Panc1 (cell line): ENCODE measurements at regions of chr2 and their contacts with region 1.

Region 1: DNA sequence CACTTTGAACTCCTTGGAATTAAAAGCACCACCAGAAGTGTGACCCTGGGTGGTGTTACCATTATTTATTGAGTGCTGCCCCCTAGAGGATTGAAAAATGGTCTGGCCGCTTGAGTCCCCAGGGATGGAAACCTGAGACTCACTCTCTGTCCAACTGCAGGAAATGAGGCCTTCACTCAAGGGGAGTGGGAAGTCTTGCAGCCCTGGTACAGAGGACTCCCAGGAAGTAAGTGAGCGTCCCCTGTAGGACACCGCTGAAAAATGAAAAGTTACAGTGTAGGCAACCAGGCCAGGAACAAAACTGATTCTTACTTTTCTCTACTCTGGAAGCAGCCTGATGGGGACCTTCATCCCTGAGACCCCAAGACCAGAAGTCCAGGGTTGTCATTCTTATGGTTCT is 2.2 kb upstream of the NRP2 start:
- DNase-seq: peak; percentile 41
- ATAC-seq: peak; percentile 82
- H3K4me3 ChIP-seq: no peak overlapping the region
- H3K27ac ChIP-seq: no peak overlapping the region
- H3K4me1 ChIP-seq: peaks cover 2% of the 10 kb centered on the region; the same call in 1 of the 2 replicates
- H3K27me3 ChIP-seq: peaks cover 16% of the 10 kb centered on the region
- CTCF ChIP-seq: peak; percentile 86

Region 2: DNA sequence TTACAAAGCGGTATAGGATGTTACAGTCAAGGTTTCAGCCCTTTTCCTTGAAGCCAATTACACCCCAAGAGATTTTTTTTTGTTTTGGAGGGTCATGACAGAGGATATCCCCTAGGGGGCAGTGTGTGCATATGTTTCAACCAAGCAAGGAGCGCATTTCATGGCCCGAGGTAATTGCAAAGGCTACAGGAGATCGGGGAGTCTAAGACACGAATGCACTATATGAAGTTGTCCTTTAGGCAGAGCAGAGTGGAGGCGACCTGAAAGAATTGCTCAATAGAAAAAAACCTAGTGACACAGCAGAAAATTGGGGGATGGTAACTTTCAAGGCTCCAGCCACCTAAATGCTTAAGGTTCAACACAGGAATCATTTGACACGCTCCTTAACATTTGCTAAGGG is 1354.6 kb before region 1 on chr2:
- CTCF ChIA-PET with region 1: no interaction called
- POLR2A ChIA-PET with region 1: no interaction called
- in situ Hi-C with region 1: no loop called
- intact Hi-C with region 1: loop called (anchors 5 kb)
- DNase-seq: peak; percentile 47
- ATAC-seq: peak; percentile 90
- H3K4me3 ChIP-seq: no peak overlapping the region
- H3K27ac ChIP-seq: no peak overlapping the region
- H3K4me1 ChIP-seq: no peaks in the 10 kb centered on the region
- H3K27me3 ChIP-seq: no peaks in the 10 kb centered on the region
- CTCF ChIP-seq: peak; percentile 85

Region 3: DNA sequence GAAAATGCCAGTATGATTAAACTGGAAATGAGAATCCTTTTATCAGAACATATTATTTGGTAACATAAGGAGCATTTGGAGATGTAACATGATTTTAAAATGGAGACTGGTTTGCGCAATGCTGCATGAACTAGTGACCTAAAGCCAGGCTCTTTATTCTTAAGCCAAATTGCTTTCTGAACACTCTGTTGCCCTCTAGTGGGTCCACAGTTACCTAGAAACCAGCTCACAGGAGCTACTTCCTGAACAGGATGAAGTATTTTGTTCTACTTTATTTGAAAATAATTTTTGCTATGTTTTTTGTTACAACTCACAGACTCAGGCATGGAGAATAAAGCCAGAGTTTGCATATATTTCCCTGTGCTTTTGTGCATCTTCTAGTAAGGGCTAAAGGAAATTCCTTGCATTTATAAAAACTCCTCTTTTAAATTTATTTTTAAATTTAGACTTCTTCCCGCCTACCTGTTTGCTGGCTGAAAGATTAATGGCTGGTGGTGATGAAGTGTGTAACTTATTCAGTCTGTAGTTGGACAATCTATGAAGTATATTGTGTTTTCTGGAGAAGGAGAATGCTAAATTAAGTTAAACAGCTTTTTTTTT is 988.1 kb before region 1 on chr2:
- CTCF ChIA-PET with region 1: interaction called, 5 read pairs
- POLR2A ChIA-PET with region 1: no interaction called
- in situ Hi-C with region 1: no loop called
- intact Hi-C with region 1: loop called (anchors 10 kb)
- DNase-seq: peak; percentile 32
- ATAC-seq: peak; percentile 72; the same call in 1 of the 2 replicates
- H3K4me3 ChIP-seq: no peak overlapping the region
- H3K27ac ChIP-seq: no peak overlapping the region
- H3K4me1 ChIP-seq: no peaks in the 10 kb centered on the region
- H3K27me3 ChIP-seq: no peaks in the 10 kb centered on the region
- CTCF ChIP-seq: peak; percentile 73; the same call in 1 of the 2 replicates

Region 4: GRCh38 chr2:204871231-204871953 is 808.7 kb before region 1 on chr2:
- CTCF ChIA-PET with region 1: interaction called, 4 read pairs
- POLR2A ChIA-PET with region 1: no interaction called
- in situ Hi-C with region 1: no loop called
- intact Hi-C with region 1: loop called (anchors 5 kb)
- DNase-seq: peak; percentile 15
- ATAC-seq: 0 out of 2 replicates have a peak, but pooled peaks have one; percentile 70
- H3K4me3 ChIP-seq: no peak overlapping the region
- H3K27ac ChIP-seq: no peak overlapping the region; the same call in 1 of the 2 replicates
- H3K4me1 ChIP-seq: no peaks in the 10 kb centered on the region; the same call in 1 of the 2 replicates
- H3K27me3 ChIP-seq: no peaks in the 10 kb centered on the region
- CTCF ChIP-seq: peak; percentile 64; the same call in 1 of the 2 replicates

Region 5: GRCh38 chr2:205024822-205025518 is 655.1 kb before region 1 on chr2:
- CTCF ChIA-PET with region 1: no interaction called
- POLR2A ChIA-PET with region 1: no interaction called
- in situ Hi-C with region 1: no loop called
- intact Hi-C with region 1: loop called (anchors 10 kb)
- DNase-seq: peak; percentile 85
- ATAC-seq: peak; percentile 96
- H3K4me3 ChIP-seq: peak overlapping the region; percentile 37 to 65
- H3K27ac ChIP-seq: peak overlapping the region; percentile 98
- H3K4me1 ChIP-seq: peaks cover 36% of the 10 kb centered on the region
- H3K27me3 ChIP-seq: no peaks in the 10 kb centered on the region
- CTCF ChIP-seq: no peak

Region 6: DNA sequence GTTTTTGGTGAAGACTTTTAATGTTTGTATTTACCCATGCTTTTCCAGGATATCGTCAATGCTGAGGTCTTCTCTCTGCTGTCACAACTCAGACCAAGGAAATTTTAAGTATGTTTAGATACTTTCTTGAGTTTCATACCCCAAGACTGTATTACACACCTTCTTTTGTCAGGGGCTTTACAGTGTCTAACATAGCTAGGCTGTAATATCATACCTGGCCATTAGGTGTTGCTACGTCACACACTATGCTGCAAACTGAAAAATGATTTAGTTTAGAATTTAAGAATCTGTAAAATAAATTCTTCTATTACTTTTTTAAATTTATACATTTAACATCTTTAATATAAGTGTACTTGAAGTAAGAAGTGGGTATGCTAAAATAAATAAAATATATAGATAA is 356.1 kb before region 1 on chr2:
- CTCF ChIA-PET with region 1: interaction called, 5 read pairs
- POLR2A ChIA-PET with region 1: no interaction called
- in situ Hi-C with region 1: no loop called
- intact Hi-C with region 1: loop called (anchors 10 kb)
- DNase-seq: no peak
- ATAC-seq: no peak
- H3K4me3 ChIP-seq: no peak overlapping the region
- H3K27ac ChIP-seq: no peak overlapping the region
- H3K4me1 ChIP-seq: no peaks in the 10 kb centered on the region
- H3K27me3 ChIP-seq: no peaks in the 10 kb centered on the region
- CTCF ChIP-seq: peak; percentile 65; the same call in 1 of the 2 replicates

Region 7: GRCh38 chr2:205585449-205586383 is 94.4 kb before region 1 on chr2:
- CTCF ChIA-PET with region 1: no interaction called
- POLR2A ChIA-PET with region 1: no interaction called
- in situ Hi-C with region 1: no loop called
- intact Hi-C with region 1: no loop called
- DNase-seq: no peak
- ATAC-seq: no peak
- H3K4me3 ChIP-seq: no peak overlapping the region
- H3K27ac ChIP-seq: no peak overlapping the region
- H3K4me1 ChIP-seq: no peaks in the 10 kb centered on the region
- H3K27me3 ChIP-seq: no peaks in the 10 kb centered on the region
- CTCF ChIP-seq: no peak